Sciatic nerve (tissue), 2 donors: ENCODE measurements at regions of chr7 and their contacts with region 1.

Region 1: GRCh38 chr7:156121956-156122355 is 309.7 kb upstream of the SHH start:
- DNase-seq: no peak
- ATAC-seq: no peak

Region 2: GRCh38 chr7:156079156-156079555 is 42.8 kb before region 1 on chr7:
- intact Hi-C with region 1: loop called (anchors 1 kb)
- DNase-seq: no peak
- ATAC-seq: no peak

Region 3: DNA sequence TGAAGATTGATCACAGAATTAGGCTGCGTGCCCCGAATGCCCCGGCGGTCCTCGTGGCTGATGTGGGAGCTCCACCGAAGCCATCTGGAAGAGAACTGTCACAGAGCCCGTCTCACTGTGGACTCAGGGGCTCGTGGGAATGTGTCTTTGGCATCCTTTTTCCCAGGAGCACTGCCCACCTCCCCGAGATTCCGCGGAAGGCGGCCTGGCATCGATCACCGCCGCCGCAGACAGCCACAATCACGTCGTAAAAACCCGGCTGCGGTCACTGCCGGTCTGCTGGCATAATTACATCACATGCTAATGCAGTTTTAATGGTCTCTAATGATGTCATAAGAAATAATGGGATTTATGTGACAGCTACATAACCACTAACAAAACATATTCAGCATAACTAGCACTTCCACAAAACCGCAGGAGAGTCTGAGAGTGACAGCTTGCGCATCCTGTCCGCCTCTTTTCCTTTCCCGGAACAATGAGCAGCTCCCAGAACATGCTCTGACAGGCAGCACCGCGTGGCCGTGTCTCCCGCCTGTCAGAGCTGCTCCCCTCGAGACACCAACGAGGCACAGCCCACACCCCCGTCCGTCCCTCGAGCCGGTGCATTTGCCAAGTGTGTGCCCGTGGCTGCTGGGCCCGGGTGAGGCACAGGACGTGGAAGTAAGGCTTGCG is 1975.6 kb after region 1 on chr7:
- intact Hi-C with region 1: no loop called
- DNase-seq: no peak
- ATAC-seq: no peak